Heart left ventricle (tissue), 16 donors: ENCODE measurements at regions of chr17 and their contacts with region 1.

Region 1: GRCh38 chr17:57077000-57077399 is 8.0 kb upstream of the AKAP1 start:
- DNase-seq: no peak
- ATAC-seq: no peak
- H3K4me3 ChIP-seq: no peak overlapping the region
- H3K27ac ChIP-seq: no peak overlapping the region
- H3K4me1 ChIP-seq: peaks cover 0 to 6% (median 0%) of the 10 kb centered on the region in 12 donors
- H3K27me3 ChIP-seq: no peaks in the 10 kb centered on the region
- CTCF ChIP-seq: no peak
- POLR2A ChIP-seq: no peak

Region 2: GRCh38 chr17:57016747-57017082 is 60.3 kb before region 1 on chr17:
- intact Hi-C with region 1: no loop called
- DNase-seq: no peak
- ATAC-seq: no peak
- H3K4me3 ChIP-seq: no peak overlapping the region
- H3K27ac ChIP-seq: no peak overlapping the region
- H3K4me1 ChIP-seq: no peaks in the 10 kb centered on the region
- H3K27me3 ChIP-seq: peaks cover 0 to 8% (median 0%) of the 10 kb centered on the region in 9 donors
- CTCF ChIP-seq: no peak
- POLR2A ChIP-seq: no peak

Region 3: GRCh38 chr17:57033295-57033694 is 43.7 kb before region 1 on chr17:
- intact Hi-C with region 1: no loop called
- DNase-seq: peak in 3 of 5 donors; percentile 44 to 49 (median 47)
- ATAC-seq: peak; percentile 64 to 90 (median 79)
- H3K4me3 ChIP-seq: no peak overlapping the region
- H3K27ac ChIP-seq: peak overlapping the region; percentile 43 to 95 (median 84)
- H3K4me1 ChIP-seq: peaks cover 0 to 41% (median 13%) of the 10 kb centered on the region in 12 donors
- H3K27me3 ChIP-seq: peaks cover 0 to 11% (median 0%) of the 10 kb centered on the region in 9 donors
- CTCF ChIP-seq: no peak
- POLR2A ChIP-seq: no peak

Region 4: GRCh38 chr17:57044976-57045867 is 31.8 kb before region 1 on chr17:
- intact Hi-C with region 1: loop called in 1 of 10 experiments (anchors 5 kb)
- DNase-seq: peak in 2 of 5 donors; percentile 23 to 66
- ATAC-seq: peak in 3 of 4 donors; percentile 14 to 15 (median 15)
- H3K4me3 ChIP-seq: peak overlapping the region in 9 of 12 donors; percentile 32 to 55 (median 42)
- H3K27ac ChIP-seq: no peak overlapping the region
- H3K4me1 ChIP-seq: peaks cover 0 to 19% (median 10%) of the 10 kb centered on the region in 12 donors
- H3K27me3 ChIP-seq: peaks cover 0 to 44% (median 22%) of the 10 kb centered on the region in 9 donors
- CTCF ChIP-seq: no peak
- POLR2A ChIP-seq: no peak

Region 5: GRCh38 chr17:57121338-57122042 is 44.5 kb after region 1 on chr17:
- intact Hi-C with region 1: no loop called
- DNase-seq: peak in 1 of 5 donors; percentile 41
- ATAC-seq: peak; percentile 19 to 57 (median 47)
- H3K4me3 ChIP-seq: no peak overlapping the region
- H3K27ac ChIP-seq: peak overlapping the region in 2 of 12 donors; percentile 14 to 41
- H3K4me1 ChIP-seq: peaks cover 0 to 18% (median 0%) of the 10 kb centered on the region in 12 donors
- H3K27me3 ChIP-seq: no peaks in the 10 kb centered on the region
- CTCF ChIP-seq: peak in 11 of 12 donors; percentile 12 to 61 (median 45)
- POLR2A ChIP-seq: no peak

Region 6: GRCh38 chr17:57211543-57211942 is 134.5 kb after region 1 on chr17:
- intact Hi-C with region 1: no loop called
- DNase-seq: no peak
- ATAC-seq: no peak
- H3K4me3 ChIP-seq: no peak overlapping the region
- H3K27ac ChIP-seq: no peak overlapping the region
- H3K4me1 ChIP-seq: no peaks in the 10 kb centered on the region
- H3K27me3 ChIP-seq: no peaks in the 10 kb centered on the region
- CTCF ChIP-seq: no peak
- POLR2A ChIP-seq: no peak